Transverse colon (tissue), 4 donors: ENCODE measurements at regions of chr1 and their contacts with region 1.

Region 1: GRCh38 chr1:159214149-159214760 is 9.6 kb downstream of the ACKR1 start:
- DNase-seq: peak; percentile 20
- H3K4me3 ChIP-seq: no peak overlapping the region
- H3K27ac ChIP-seq: no peak overlapping the region
- H3K4me1 ChIP-seq: no peaks in the 10 kb centered on the region
- H3K27me3 ChIP-seq: peaks cover 25% of the 10 kb centered on the region
- CTCF ChIP-seq: peak; percentile 62 to 91 (median 84)
- EP300 ChIP-seq: no peak
- POLR2A ChIP-seq: no peak

Region 2: DNA sequence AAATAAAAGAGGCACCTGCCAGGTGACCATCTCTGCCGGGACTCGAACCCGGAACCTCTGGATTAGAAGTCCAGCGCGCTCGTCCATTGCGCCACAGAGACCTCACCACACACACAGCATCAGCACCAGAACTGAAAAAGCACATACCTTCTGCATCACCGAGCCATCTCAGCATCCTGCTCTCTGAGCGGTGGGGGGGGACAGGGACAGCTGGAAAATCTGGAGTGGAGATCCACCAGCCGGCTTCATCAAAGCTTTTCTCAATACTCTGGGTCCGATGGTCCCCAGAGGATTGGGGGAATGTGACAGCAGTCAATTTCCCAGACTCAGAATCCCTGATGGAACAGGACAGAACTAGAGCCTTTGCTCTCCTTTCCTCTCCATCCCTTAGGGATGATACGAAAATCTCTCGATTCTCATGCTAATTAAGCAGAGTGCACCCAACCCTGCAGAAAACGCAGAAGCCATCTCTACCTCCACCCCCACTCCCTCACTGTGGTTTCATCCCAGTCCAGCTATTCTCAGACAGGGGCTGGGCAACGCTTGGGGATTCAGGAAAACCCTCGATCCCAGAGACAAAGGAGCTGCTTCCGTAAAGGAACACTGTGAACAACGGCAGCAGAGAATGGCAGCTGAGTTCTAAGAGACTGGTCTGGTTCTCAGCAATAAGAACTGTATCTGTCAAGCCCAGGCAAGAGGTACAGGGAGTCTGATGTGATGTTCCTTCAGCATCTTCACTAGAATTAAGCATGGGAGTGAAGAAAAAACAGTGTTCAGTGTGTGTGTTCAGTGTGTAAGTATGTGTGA is 72.5 kb before region 1 on chr1:
- in situ Hi-C with region 1: no loop called
- intact Hi-C with region 1: loop called (anchors 5 kb)
- DNase-seq: no peak
- H3K4me3 ChIP-seq: no peak overlapping the region
- H3K27ac ChIP-seq: no peak overlapping the region
- H3K4me1 ChIP-seq: no peaks in the 10 kb centered on the region
- H3K27me3 ChIP-seq: peaks cover 19% of the 10 kb centered on the region
- CTCF ChIP-seq: no peak
- EP300 ChIP-seq: no peak
- POLR2A ChIP-seq: no peak

Region 3: DNA sequence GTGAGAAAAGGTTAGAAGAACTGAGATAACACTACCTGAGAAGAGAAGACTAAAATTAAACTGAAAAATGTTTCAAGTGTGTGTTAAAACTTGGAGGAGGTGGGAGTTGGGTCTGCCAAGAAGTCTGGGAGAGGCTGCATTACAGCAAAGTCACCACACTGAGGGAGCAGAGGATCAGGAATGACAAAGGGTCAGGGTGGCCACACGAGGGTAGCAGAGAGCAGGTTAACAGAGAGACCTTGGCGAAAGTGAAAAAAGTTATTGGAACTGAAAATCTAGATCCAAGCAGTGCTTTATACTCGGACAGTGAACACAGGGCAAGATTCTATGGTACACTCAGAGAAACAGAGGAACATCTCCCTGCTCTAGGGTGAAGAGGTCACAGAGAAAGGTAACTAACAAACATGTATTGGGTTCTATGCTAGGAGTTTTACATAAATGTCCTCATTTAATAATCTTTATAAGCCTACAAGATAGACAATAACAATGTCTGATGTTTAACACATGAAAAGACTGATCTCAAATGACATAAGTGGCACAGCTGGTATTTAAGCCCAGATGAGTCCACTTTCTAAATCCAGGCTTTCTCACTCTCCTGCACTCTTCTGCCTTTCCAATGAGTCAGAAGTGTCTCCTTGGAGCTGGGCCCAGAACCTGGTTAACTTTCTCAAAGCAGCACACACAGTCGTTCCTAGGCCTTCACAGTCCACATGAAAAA is 53.1 kb before region 1 on chr1:
- in situ Hi-C with region 1: loop called in 1 of 4 experiments (anchors 10 kb)
- intact Hi-C with region 1: no loop called
- DNase-seq: peak; percentile 63
- H3K4me3 ChIP-seq: no peak overlapping the region
- H3K27ac ChIP-seq: peak overlapping the region in 2 of 4 donors; percentile 35 to 63
- H3K4me1 ChIP-seq: peaks cover 0 to 4% (median 0%) of the 10 kb centered on the region in 4 donors
- H3K27me3 ChIP-seq: no peaks in the 10 kb centered on the region
- CTCF ChIP-seq: peak; percentile 85 to 93 (median 90)
- EP300 ChIP-seq: no peak
- POLR2A ChIP-seq: no peak

Region 4: GRCh38 chr1:161092621-161093028 is 1878.4 kb after region 1 on chr1:
- in situ Hi-C with region 1: no loop called
- intact Hi-C with region 1: loop called (anchors 5 kb)
- DNase-seq: no peak
- H3K4me3 ChIP-seq: no peak overlapping the region
- H3K27ac ChIP-seq: no peak overlapping the region
- H3K4me1 ChIP-seq: peaks cover 4 to 26% (median 11%) of the 10 kb centered on the region in 4 donors
- H3K27me3 ChIP-seq: no peaks in the 10 kb centered on the region
- CTCF ChIP-seq: no peak
- EP300 ChIP-seq: no peak
- POLR2A ChIP-seq: no peak